ENCODE measurements at regions of chr9 and their contacts with region 1.

Region 1: DNA sequence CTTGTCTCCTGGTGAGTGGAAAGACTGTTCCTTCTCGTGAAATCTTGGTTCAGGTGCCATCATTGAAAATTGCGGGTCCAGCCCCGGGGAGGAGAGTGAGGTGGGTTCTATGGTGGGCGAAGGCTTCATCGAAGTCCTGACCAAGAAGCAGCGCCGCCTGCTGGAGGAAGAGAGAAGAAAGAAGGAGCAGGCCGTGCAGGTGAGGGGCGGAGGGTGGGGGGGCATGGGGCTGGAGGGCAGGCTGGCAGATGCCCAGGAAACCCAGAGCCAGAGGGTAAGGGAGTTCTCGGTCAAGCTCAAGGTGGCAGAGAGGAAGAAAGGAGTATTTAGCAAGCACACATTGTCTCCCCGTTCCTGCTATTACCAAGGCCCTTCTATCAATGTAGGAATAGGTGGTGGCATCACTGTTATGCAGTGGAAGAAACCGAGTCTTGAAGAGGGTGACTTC is 24.3 kb upstream of the POMT1 start:
- DNase-seq: no peak
- ATAC-seq: no peak
- H3K4me3 ChIP-seq: no peak overlapping the region
- H3K27ac ChIP-seq: peak overlapping the region; percentile 7 to 90 (median 80)
- H3K4me1 ChIP-seq: peaks cover 22 to 43% of the 10 kb centered on the region in 2 donors
- H3K27me3 ChIP-seq: no peaks in the 10 kb centered on the region
- CTCF ChIP-seq: peak in 4 of 5 experiments; percentile 40 to 66 (median 48)
- POLR2A ChIP-seq: no peak

Region 2: GRCh38 chr9:131393622-131394463 is 84.6 kb before region 1 on chr9 and contains the start of gene PRRC2B:
- in situ Hi-C with region 1: loop called in 2 of 4 experiments (anchors 25 kb)
- intact Hi-C with region 1: no loop called
- DNase-seq: peak; percentile 77 to 79
- ATAC-seq: peak; percentile 70 to 80
- H3K4me3 ChIP-seq: peak within 1 kb of the TSS; percentile 56 to 65 (median 60)
- H3K27ac ChIP-seq: peak within 1 kb of the TSS; percentile 93 to 96 (median 94)
- H3K4me1 ChIP-seq: peaks cover 40% of the 10 kb centered on the region in 2 donors
- H3K27me3 ChIP-seq: no peaks in the 10 kb centered on the region
- CTCF ChIP-seq: peak in 3 of 5 experiments; percentile 38 to 96 (median 47)
- POLR2A ChIP-seq: peak; percentile 78
- total RNA-seq, gene PRRC2B: 29.9 to 41.6 (median 37.2) TPM

Region 3: DNA sequence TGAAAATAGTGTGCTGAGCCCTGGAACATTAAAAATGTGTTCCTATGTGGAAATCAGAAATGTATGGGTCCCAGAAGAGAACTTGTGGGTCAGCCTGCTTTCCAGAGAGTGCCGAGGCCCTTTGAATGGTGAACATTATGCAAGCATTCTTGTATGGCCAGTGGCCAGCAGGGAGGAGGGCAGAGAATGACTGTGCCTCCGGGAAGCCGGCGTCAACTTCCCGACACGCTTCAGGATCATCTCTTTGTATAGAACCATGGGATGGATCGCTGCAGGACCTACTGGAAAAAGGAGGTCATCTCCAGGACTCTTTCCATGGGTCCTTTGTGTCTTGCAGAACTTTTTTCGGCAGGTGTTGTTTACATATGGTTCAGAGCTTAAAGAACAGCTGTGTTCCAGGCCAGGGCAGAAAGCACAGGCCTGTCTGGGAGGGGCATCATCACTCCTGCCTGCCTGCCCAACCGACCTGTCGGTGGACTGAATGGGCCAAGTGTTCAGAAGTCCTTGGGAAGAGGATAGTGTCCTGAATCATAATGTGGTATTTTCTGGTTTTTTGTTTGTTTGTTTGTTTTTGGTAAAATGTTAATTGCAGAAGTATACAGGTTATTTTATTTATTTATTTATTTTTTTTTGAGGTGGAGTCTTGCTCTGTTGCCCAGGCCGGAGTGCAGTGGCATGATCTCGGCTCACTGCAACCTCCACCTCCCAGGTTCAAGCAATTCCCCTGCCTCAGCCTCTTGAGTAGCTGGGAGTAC is 75.5 kb before region 1 on chr9:
- in situ Hi-C with region 1: loop called in 2 of 4 experiments (anchors 25 kb)
- intact Hi-C with region 1: loop called (anchors 2 kb)
- DNase-seq: peak; percentile 84 to 93
- ATAC-seq: peak; percentile 75 to 79
- H3K4me3 ChIP-seq: peak overlapping the region; percentile 15 to 50 (median 28)
- H3K27ac ChIP-seq: peak overlapping the region; percentile 85 to 96 (median 92)
- H3K4me1 ChIP-seq: peaks cover 98 to 99% of the 10 kb centered on the region in 2 donors
- H3K27me3 ChIP-seq: no peaks in the 10 kb centered on the region
- CTCF ChIP-seq: no peak
- POLR2A ChIP-seq: peak in 1 of 2 donors; percentile 22

Region 4: DNA sequence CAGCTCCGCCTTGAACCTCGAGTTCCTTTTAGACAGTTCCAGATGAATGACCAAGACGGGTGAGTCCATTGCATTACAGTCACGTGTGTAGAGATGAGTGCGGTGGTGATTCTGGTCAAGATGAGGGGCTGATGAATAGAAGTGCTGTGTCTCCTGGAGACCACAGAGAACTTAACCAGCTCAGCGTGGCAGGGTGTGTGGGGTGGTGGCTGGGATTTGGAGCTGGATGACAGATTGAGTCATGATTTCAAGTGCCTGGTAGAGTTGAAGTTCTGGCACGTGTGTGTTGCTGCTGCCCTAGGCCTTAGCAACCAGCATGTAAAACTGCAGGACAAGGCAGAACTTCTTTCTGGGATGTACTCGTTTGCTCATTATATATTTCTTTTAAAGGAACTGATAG is 31.3 kb before region 1 on chr9:
- in situ Hi-C with region 1: no loop called
- intact Hi-C with region 1: no loop called
- DNase-seq: no peak
- ATAC-seq: no peak
- H3K4me3 ChIP-seq: no peak overlapping the region
- H3K27ac ChIP-seq: no peak overlapping the region
- H3K4me1 ChIP-seq: no peaks in the 10 kb centered on the region
- H3K27me3 ChIP-seq: no peaks in the 10 kb centered on the region
- CTCF ChIP-seq: no peak
- POLR2A ChIP-seq: no peak

Region 5: DNA sequence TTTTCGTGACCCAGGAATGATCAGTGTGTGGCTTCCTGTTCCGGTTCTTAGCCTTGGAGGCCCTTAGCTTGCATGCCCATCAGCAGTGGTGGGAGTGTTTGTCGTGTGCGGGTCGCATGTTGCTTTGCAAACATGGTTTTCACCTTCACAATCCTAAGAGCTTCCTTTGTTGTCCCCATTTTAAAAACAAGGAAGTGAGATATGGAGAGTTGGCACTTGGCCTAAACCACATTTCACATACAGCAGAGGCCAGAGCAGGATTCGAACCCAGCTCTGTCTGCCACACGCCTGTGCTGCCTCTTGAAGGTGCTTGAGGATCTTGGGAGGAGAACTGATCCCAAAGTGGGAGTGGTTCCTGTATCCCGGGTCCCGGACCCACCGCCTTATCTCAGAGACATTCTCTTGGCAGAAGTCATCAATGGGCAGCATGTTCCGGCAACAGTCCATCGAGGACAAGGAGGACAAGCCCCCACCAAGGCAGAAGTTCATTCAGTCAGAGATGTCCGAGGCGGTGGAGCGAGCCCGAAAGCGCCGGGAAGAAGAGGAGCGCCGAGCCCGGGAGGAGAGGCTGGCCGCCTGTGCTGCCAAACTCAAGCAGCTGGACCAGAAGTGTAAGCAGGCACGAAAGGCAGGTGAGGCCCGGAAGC is 14.0 kb before region 1 on chr9:
- in situ Hi-C with region 1: no loop called
- intact Hi-C with region 1: no loop called
- DNase-seq: no peak
- ATAC-seq: no peak
- H3K4me3 ChIP-seq: no peak overlapping the region
- H3K27ac ChIP-seq: no peak overlapping the region
- H3K4me1 ChIP-seq: peaks cover 0 to 3% of the 10 kb centered on the region in 2 donors
- H3K27me3 ChIP-seq: no peaks in the 10 kb centered on the region
- CTCF ChIP-seq: no peak
- POLR2A ChIP-seq: no peak

Region 6: DNA sequence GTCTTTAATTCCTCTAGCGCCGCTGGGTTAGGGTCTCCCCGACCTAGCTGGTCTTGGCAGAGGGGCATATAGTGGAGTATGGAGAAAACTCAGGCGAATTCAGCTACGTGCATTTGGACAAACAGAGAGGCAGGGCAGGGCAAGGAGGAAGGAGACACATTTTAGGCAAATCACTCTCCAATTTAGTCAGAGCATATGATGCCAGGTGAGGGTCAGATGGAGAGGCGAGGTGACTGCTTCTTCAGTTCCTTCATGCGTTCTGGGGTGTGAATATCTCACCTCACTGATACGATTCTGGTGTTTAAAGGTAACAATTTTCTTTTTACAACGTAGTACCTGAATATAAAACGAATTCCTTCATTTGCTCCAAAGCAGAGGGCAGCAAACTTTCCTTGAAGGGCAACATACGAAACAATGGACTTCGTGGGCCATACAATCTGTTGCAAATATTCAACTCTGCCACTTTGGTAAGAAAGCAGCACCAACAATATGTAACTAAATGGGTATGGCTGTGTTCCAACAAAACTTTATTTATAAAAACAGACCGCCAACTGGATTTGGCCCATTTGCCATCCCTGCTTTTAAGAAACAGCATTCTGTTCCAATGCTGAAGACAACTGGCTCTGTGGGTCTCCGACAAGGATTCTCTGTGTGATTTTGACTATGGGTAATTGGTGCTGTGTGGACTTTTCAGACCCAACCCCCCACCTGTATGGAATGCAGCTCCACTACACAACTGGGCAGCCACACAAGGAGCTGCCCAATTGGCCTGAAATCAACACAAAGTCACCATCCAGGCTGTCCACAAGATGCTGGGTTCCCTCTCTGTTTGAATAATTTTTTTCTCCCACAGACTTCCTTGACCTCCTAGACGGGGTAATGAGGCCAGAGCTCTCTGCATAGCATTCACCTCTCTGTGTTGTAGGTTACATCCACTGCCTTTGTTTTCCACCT is 207.6 kb after region 1 on chr9:
- in situ Hi-C with region 1: no loop called
- intact Hi-C with region 1: no loop called
- DNase-seq: no peak
- ATAC-seq: no peak
- H3K4me3 ChIP-seq: no peak overlapping the region
- H3K27ac ChIP-seq: no peak overlapping the region
- H3K4me1 ChIP-seq: peaks cover 6 to 19% of the 10 kb centered on the region in 2 donors
- H3K27me3 ChIP-seq: no peaks in the 10 kb centered on the region
- CTCF ChIP-seq: no peak
- POLR2A ChIP-seq: no peak

Measured in gastrocnemius medialis (tissue), 4 donors.